Prostate gland (tissue), 2 donors: ENCODE measurements at regions of chr1 and their contacts with region 1.

Region 1: GRCh38 chr1:41516168-41517061 is 31.9 kb upstream of the EDN2 start:
- DNase-seq: peak; percentile 92
- H3K4me3 ChIP-seq: peak overlapping the region; percentile 22 to 25
- H3K27ac ChIP-seq: peak overlapping the region in 1 of 2 donors; percentile 45
- H3K4me1 ChIP-seq: no peaks in the 10 kb centered on the region
- H3K27me3 ChIP-seq: no peaks in the 10 kb centered on the region
- CTCF ChIP-seq: peak; percentile 74 to 96 (median 94)
- POLR2A ChIP-seq: peak; percentile 37

Region 2: GRCh38 chr1:40745176-40745575 is 771.2 kb before region 1 on chr1:
- intact Hi-C with region 1: no loop called
- DNase-seq: no peak
- H3K4me3 ChIP-seq: no peak overlapping the region
- H3K27ac ChIP-seq: no peak overlapping the region
- H3K4me1 ChIP-seq: no peaks in the 10 kb centered on the region
- H3K27me3 ChIP-seq: no peaks in the 10 kb centered on the region
- CTCF ChIP-seq: no peak
- POLR2A ChIP-seq: no peak

Region 3: DNA sequence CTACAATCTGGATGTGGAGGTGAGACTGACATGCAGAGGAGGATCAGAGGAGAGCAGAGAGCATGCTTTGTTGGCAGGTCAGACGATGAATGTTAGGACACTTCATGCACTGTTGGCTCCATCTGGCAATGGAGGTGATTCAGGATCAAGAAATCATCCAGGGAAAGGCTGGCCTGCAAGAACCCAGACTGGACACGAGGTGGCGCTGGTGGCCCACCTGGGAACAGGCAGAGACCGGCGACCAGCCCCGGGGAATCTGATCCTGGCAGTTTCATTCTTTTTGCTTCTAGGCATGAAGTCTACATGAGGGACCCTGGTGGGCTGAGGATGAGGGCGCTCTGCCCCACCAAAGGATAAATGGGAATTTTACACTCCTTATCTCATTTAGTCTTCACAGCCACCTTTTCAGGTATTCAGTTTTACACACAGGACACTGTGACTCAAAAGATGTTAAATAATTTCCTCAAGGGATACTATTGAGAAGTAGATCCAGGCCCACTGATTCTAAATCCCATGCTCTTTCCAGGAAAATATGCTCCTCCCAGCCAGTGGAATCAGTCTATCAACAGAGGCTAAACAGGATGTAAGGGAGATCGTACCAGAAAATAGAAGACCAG is 248.2 kb before region 1 on chr1:
- intact Hi-C with region 1: loop called (anchors 5 kb)
- DNase-seq: peak; percentile 70
- H3K4me3 ChIP-seq: no peak overlapping the region
- H3K27ac ChIP-seq: no peak overlapping the region
- H3K4me1 ChIP-seq: no peaks in the 10 kb centered on the region
- H3K27me3 ChIP-seq: no peaks in the 10 kb centered on the region
- CTCF ChIP-seq: peak; percentile 94 to 97 (median 95)
- POLR2A ChIP-seq: no peak